ENCODE measurements at regions of chr9 and their contacts with region 1.

Region 1: DNA sequence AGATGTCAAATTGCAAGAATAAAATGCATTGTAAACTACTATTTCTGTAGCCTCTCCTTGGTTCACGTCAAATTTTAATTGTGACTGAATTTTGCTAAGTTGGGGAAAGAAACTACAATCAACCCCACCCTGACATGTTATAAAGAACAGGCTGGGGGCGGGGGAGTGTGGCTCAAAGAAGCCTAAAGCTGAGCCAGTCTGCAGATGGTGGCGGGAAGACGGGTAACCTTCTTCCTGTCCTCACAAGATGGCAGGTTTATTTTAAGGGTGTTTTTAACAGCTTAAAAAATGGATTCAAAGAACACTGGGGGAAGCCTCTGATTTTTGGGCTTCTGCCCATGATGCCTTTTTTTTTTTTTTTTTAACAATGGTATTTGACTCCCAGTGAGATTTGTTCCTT is 68.5 kb upstream of the MELK start:
- DNase-seq: no peak
- ATAC-seq: no peak
- H3K4me3 ChIP-seq: no peak overlapping the region
- H3K27ac ChIP-seq: no peak overlapping the region
- H3K4me1 ChIP-seq: no peaks in the 10 kb centered on the region
- H3K27me3 ChIP-seq: no peaks in the 10 kb centered on the region
- CTCF ChIP-seq: no peak
- POLR2A ChIP-seq: no peak

Region 2: DNA sequence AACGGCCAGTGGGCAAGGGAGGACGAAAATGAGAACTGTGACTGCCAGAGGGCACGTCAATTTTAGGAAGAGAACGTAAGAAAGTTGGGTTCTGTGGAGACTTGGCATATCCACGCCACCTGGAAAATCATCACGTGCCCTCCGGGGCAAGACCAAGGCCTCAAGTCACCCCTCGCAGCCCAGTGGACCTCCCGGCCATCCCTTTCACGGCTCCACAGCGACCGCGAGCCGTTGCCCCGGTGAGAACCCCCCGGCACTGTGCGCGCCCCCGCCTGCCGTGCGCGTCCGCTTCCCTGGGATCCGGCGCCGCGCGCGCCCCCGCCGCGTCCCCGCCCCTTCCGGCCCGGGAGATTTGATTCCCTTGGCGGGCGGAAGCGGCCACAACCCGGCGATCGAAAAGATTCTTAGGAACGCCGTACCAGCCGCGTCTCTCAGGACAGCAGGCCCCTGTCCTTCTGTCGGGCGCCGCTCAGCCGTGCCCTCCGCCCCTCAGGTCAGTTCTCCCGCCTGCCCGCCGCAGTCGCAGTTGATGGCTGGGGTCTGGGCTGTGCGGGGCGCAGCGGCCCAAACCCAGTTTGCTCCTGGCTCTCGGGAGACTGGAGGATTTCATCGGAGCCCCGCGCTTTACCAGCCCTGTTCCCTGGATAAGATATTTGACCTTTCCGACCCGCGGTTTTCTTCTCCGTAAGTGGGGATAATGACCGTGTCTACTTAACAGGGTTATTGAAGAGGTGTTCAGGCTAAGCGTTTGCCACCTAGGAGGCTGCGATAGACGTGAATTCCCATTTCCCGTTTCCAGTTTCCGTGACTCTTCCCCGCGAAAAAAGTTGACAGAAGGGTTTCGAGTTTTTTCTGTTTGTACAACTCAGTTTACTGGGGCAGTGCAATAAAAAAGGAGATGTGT is 68.6 kb after region 1 on chr9 and contains the start of gene MELK:
- in situ Hi-C with region 1: no loop called
- intact Hi-C with region 1: loop called (anchors 5 kb)
- DNase-seq: peak; percentile 24 to 62
- ATAC-seq: peak; percentile 89
- H3K4me3 ChIP-seq: peak within 1 kb of the TSS; percentile 80 to 88 (median 84)
- H3K27ac ChIP-seq: peak within 1 kb of the TSS; percentile 64 to 81 (median 74)
- H3K4me1 ChIP-seq: peaks cover 8 to 9% of the 10 kb centered on the region in 2 donors
- H3K27me3 ChIP-seq: no peaks in the 10 kb centered on the region
- CTCF ChIP-seq: no peak
- POLR2A ChIP-seq: peak in 1 of 2 donors; percentile 26
- total RNA-seq, gene MELK: 0.29 TPM in 1 of 4 donors, not detected in the others

Region 3: DNA sequence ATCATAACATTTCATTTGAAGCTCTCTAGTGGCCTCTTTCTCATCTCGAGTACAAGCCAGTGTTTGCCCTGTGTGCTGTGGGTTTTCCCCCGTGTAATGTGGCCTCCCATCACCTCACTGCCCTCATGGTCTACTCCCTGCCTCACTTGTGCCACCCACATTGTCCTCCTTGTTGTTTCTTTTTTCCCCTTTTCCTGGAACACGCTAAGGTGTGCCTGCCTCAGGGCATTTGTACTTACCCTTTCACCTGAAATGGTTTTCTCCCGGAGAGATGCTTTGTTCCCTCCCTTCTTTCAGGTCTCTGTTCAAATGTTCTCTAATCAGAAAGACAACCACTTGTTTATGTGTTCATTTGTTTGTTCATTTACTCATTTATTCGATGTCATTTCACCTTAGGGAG is 108.8 kb after region 1 on chr9:
- in situ Hi-C with region 1: no loop called
- intact Hi-C with region 1: no loop called
- DNase-seq: no peak
- ATAC-seq: no peak
- H3K4me3 ChIP-seq: no peak overlapping the region
- H3K27ac ChIP-seq: no peak overlapping the region
- H3K4me1 ChIP-seq: no peaks in the 10 kb centered on the region
- H3K27me3 ChIP-seq: no peaks in the 10 kb centered on the region
- CTCF ChIP-seq: no peak
- POLR2A ChIP-seq: no peak

Measured in gastrocnemius medialis (tissue), 4 donors.